BJ (cell line): ENCODE measurements at regions of chr3 and their contacts with region 1.

Region 1: DNA sequence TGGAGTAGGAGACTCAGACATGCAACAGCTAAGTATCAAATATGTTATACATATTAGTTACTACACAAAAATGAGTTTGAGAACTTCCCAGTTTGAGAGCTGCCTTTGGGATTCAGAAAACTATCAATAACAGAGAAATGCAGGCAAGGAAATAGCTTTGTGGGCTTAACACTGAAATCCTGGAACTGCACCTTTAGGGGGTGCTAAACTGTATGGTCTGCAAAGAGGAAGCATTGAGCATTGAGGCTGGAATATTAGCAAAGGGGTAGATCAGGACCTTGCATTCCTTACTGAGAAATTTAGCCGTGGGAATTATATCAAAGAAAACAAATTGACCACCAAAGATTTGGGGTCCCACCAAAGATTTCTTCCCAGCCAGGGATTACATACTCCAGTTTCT is 580.0 kb downstream of the ZNF385D start:
- DNase-seq: no peak
- H3K4me3 ChIP-seq: no peak overlapping the region
- H3K27me3 ChIP-seq: no peaks in the 10 kb centered on the region
- CTCF ChIP-seq: peak; percentile 53

Region 2: GRCh38 chr3:21158861-21159542 is 12.0 kb before region 1 on chr3:
- CTCF ChIA-PET with region 1: interaction called, 25 read pairs
- POLR2A ChIA-PET with region 1: no interaction called
- DNase-seq: peak; percentile 23
- H3K4me3 ChIP-seq: no peak overlapping the region
- H3K27me3 ChIP-seq: no peaks in the 10 kb centered on the region
- CTCF ChIP-seq: no peak

Region 3: GRCh38 chr3:21310161-21310560 is 139.2 kb after region 1 on chr3:
- CTCF ChIA-PET with region 1: no interaction called
- POLR2A ChIA-PET with region 1: no interaction called
- DNase-seq: no peak
- H3K4me3 ChIP-seq: no peak overlapping the region
- H3K27me3 ChIP-seq: no peaks in the 10 kb centered on the region
- CTCF ChIP-seq: no peak